ENCODE measurements at regions of chr18 and their contacts with region 1.

Region 1: GRCh38 chr18:67199993-67200617 is 316.4 kb downstream of the DSEL start:
- DNase-seq: peak in 4 of 5 donors; percentile 28 to 42 (median 31)
- H3K4me3 ChIP-seq: no peak overlapping the region
- H3K4me3 Mint-ChIP-seq: no peak overlapping the region
- H3K27ac ChIP-seq: no peak overlapping the region
- H3K27ac Mint-ChIP-seq: no peak overlapping the region
- H3K4me1 ChIP-seq: no peaks in the 10 kb centered on the region
- H3K4me1 Mint-ChIP-seq: peaks cover 0 to 1% (median 0%) of the 10 kb centered on the region in 4 donors
- H3K27me3 ChIP-seq: no peaks in the 10 kb centered on the region
- H3K27me3 Mint-ChIP-seq: peaks cover 3% of the 10 kb centered on the region in 2 donors

Region 2: DNA sequence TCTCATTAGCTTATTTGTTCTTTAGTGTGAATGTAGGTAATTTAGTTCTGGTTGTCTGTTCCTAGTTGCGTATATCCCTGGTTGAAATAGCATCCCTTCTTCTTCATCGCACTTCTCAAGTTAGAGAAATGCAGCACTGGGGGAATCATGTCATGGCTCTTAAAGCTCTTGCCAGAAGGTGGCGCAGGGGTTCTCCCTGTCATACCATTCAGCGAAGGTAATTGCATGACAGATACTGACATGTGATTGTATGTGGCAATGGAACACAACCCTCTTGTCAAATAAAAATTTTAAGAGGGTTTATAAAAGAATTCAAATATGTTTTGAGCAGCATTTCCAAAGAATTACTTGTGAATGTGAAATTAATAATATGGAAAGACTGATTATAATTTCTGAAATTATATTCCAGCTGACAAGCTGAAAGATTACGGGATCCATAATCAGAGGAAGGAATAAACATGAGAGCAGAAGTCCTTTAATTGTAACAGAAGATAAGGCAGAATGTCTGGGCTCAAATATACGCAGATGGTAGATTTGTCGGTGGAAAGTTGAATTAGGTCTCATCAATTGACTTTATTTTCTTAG is 95.3 kb before region 1 on chr18:
- CTCF ChIA-PET with region 1: interaction called, 4 read pairs
- POLR2A ChIA-PET with region 1: no interaction called
- intact Hi-C with region 1: loop called (anchors 1 kb)
- DNase-seq: peak in 4 of 5 donors; percentile 13 to 26 (median 18)
- H3K4me3 ChIP-seq: no peak overlapping the region
- H3K4me3 Mint-ChIP-seq: no peak overlapping the region
- H3K27ac ChIP-seq: no peak overlapping the region
- H3K27ac Mint-ChIP-seq: no peak overlapping the region
- H3K4me1 ChIP-seq: no peaks in the 10 kb centered on the region
- H3K4me1 Mint-ChIP-seq: peaks cover 0 to 3% (median under 1%) of the 10 kb centered on the region in 4 donors
- H3K27me3 ChIP-seq: no peaks in the 10 kb centered on the region
- H3K27me3 Mint-ChIP-seq: peaks cover 2% of the 10 kb centered on the region in 2 donors

Region 3: DNA sequence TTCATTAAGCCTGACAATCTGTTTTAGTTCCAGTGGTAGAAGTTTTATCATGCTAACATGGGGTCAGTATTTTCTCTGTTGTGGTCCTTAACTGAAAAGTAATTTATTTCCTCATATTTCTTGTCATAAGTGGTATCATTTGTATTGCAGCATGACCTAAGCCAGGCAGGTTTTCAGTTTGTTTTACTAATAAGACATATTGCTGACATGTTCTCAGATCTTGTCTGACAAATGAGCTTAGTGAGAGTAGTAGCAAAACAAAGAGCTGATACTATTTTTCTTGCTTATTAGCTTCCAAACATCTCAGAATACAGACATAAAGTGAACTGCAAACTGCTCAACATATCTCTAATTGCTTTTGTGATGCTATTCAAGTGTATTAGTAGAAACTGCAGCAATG is 22.8 kb after region 1 on chr18:
- CTCF ChIA-PET with region 1: no interaction called
- POLR2A ChIA-PET with region 1: no interaction called
- intact Hi-C with region 1: no loop called
- DNase-seq: no peak
- H3K4me3 ChIP-seq: no peak overlapping the region
- H3K4me3 Mint-ChIP-seq: no peak overlapping the region
- H3K27ac ChIP-seq: no peak overlapping the region
- H3K27ac Mint-ChIP-seq: no peak overlapping the region
- H3K4me1 ChIP-seq: no peaks in the 10 kb centered on the region
- H3K4me1 Mint-ChIP-seq: no peaks in the 10 kb centered on the region
- H3K27me3 ChIP-seq: no peaks in the 10 kb centered on the region
- H3K27me3 Mint-ChIP-seq: peaks cover 0 to 2% of the 10 kb centered on the region in 2 donors